RWPE1 (cell line): ENCODE measurements at regions of chr1 and their contacts with region 1.

Region 1: GRCh38 chr1:234499119-234499942 is 20.4 kb upstream of the TARBP1 start:
- DNase-seq: peak; percentile 74
- H3K27ac ChIP-seq: peak overlapping the region; percentile 94
- CTCF ChIP-seq: peak; percentile 92

Region 2: GRCh38 chr1:234486498-234487448 is 12.6 kb before region 1 on chr1:
- CTCF ChIA-PET with region 1: interaction called, 6 read pairs
- POLR2A ChIA-PET with region 1: interaction called, 13 read pairs
- DNase-seq: peak; percentile 59
- H3K27ac ChIP-seq: no peak overlapping the region
- CTCF ChIP-seq: peak; percentile 87

Region 3: DNA sequence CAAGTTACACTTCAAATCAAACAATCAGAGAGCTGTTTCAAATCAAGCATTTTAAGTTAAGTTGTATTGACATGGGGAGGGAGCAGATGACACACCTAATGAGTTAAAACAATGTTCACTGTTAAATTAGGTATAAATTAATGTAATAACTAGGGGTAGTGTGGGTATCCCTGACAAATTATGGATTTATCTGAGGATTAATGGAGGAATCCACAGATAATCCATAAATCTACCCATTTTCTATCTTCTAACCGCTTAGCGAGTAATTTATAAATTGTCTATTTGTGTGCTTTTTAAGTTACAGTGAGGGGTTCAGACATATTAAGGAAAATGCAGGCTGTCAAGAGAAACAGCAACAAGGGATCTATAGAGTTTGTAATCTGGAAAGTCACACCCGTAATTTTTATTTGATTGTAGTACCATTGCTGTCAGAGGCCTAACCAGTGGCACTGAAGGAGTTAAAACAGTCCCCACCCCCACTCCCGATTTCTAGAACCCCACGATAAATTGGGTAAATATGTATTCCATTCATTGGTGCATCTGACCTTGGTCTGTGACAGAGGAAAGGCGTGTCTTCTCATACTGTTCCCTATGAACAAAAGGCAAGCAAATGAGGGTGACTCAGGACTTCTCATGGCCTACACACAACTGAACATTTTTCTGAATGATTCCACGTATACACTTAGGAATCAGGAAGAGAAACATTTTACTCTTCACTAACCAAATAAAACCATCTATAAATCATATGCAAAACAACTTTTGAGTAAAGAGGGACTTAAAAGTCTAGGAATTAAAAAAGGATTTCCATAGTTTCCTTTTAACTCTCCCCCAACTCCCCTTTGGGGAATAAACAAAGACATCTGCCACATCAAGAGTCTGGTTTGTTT is 103.2 kb after region 1 on chr1:
- CTCF ChIA-PET with region 1: interaction called, 17 read pairs
- POLR2A ChIA-PET with region 1: interaction called, 4 read pairs
- DNase-seq: peak; percentile 77
- H3K27ac ChIP-seq: no peak overlapping the region
- CTCF ChIP-seq: no peak

Region 4: GRCh38 chr1:234724516-234725176 is 225.3 kb after region 1 on chr1:
- CTCF ChIA-PET with region 1: interaction called, 10 read pairs
- POLR2A ChIA-PET with region 1: no interaction called
- DNase-seq: no peak
- H3K27ac ChIP-seq: peak overlapping the region; percentile 98
- CTCF ChIP-seq: no peak

Region 5: DNA sequence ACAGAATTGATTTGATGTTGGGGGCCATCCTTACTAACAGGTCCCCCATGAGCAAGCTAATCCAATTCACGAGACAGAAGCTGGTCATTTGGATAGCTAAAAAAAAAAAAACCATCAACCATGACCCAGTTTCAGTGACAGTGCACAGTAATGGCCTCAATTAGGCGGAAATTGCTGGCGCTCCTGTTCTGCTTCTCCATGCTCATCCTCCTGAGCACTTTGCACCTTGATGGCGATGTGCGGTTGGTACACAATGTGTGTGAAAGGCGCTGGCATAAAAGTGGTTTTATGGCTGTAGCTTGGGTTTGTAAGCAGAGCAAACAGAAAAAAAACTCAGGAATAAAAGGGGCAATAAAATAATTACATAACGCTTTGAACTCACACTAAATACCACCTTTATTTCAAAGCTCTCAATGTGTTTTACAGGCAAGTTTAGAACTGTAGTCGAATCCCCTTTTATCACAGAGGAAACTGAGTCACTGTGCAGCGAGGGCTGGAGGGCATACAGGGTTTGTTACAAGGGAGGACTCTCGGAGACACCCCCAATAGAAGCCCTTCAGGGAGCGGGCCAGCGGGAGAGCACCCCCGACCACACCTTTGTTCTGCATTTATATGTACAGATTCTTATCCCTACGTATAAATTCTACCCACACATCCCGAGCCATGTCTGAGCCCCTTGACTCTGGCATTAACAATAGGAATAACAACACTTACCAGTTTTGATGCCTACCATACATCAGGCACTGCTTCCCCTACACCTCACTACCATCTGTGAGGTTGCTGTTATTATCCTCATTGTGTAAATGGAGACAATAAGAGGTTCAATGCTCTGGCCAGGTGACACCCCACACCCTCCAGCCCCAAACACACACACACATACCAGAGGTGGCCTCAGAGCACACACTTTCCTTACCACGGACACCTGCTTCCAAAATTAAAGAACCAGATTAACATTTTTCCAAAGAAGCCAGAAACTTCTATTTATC is 324.2 kb after region 1 on chr1:
- CTCF ChIA-PET with region 1: no interaction called
- POLR2A ChIA-PET with region 1: no interaction called
- DNase-seq: no peak
- H3K27ac ChIP-seq: no peak overlapping the region
- CTCF ChIP-seq: no peak

Region 6: DNA sequence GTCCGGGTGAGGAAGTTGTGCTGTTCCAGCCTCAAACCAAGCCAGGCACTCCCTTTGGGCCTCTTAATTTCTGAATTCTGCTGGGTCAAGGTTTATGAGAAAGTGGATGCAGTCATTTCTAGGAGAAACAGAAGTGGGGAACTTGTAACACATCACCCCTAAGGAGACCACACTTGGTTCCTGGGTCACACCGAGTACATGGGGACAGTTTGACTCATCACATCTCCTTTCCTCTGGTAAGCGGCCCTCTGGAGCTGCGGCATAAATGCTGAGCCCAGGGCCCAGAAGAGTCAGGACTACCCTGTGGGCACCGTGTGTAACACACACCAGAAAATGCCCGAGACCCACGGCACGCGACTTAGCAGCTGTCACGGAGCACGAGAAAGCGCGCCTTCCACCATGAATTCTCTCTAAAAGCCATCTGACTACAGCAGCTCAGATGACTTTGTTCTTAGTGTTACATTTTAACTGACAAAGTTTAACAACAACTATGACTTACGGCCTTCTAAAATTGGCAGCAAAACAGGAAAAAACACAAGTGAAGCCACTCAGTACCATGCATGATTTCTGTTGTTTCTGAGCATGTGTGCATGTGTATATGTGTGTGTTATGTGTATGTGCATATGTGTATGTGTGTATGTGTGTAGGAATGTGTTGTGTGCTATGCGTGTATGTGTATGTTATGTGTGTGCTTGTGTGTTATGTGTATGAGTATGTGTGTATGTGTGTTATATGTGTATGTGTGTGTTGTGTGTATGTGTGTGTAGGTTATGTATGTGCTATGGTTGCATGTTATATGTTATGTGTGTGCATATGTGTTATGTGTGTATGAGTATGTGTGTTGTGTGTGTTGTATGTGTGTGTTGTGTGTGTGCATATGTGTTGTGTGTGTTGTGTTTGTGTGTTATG is 578.5 kb after region 1 on chr1:
- CTCF ChIA-PET with region 1: interaction called, 16 read pairs
- POLR2A ChIA-PET with region 1: interaction called, 3 read pairs
- DNase-seq: no peak
- H3K27ac ChIP-seq: peak overlapping the region; percentile 86
- CTCF ChIP-seq: no peak